Right ventricle myocardium inferior (tissue), 1 donor: ENCODE measurements at regions of chr12 and their contacts with region 1.

Region 1: GRCh38 chr12:100234598-100235304 is 32.1 kb downstream of the DEPDC4 start:
- DNase-seq: no peak
- ATAC-seq: no peak

Region 2: GRCh38 chr12:100554608-100555077 is 319.9 kb after region 1 on chr12:
- intact Hi-C with region 1: loop called (anchors 5 kb)
- DNase-seq: no peak
- ATAC-seq: peak; percentile 73

Region 3: DNA sequence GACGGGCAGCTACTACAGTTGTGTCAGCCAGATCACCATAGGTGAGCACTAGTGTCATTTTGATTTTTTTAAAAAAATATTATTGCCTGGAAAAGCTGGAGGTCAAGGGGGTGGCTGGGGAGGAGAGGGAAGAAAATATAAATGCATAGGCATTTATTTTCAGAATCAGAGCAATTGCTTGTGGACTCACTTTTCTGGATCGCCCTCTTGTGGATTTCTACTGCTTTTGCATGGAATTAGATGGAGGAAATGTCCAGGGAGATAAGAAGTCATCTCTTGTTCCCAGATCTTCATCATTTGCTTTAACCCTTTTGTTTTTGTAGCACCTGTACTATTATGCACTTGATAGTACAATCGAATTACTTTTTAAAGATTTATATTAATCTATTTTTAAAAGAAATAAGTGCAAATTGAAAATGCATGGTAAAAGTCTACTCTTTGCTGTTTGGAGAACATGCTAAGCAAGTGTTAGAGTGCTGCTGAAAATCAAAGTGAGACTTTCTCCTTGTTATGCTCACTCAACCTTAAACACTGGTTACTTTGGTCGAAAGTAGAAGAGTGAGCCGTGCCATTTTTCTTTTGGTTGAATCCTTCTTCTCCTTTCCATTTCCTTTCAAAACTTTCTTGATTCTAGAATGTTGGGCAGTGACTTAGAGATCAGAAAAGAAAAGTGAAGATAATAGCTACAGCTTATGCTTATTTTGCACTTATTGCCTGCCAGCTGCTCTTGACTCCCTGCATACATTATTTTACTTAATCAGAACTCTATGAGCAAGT is 499.3 kb after region 1 on chr12:
- intact Hi-C with region 1: loop called (anchors 5 kb)
- DNase-seq: no peak
- ATAC-seq: no peak